WTC11 (cell line): ENCODE measurements at regions of chr15 and their contacts with region 1.

Region 1: GRCh38 chr15:79004336-79004735 is 59.5 kb upstream of the CTSH start:
- DNase-seq: no peak
- ATAC-seq: peak; percentile 82
- H3K4me3 Mint-ChIP-seq: no peak overlapping the region
- H3K27ac Mint-ChIP-seq: no peak overlapping the region
- H3K4me1 Mint-ChIP-seq: peaks cover 18% of the 10 kb centered on the region
- H3K27me3 Mint-ChIP-seq: no peaks in the 10 kb centered on the region
- CTCF ChIP-seq: no peak

Region 2: DNA sequence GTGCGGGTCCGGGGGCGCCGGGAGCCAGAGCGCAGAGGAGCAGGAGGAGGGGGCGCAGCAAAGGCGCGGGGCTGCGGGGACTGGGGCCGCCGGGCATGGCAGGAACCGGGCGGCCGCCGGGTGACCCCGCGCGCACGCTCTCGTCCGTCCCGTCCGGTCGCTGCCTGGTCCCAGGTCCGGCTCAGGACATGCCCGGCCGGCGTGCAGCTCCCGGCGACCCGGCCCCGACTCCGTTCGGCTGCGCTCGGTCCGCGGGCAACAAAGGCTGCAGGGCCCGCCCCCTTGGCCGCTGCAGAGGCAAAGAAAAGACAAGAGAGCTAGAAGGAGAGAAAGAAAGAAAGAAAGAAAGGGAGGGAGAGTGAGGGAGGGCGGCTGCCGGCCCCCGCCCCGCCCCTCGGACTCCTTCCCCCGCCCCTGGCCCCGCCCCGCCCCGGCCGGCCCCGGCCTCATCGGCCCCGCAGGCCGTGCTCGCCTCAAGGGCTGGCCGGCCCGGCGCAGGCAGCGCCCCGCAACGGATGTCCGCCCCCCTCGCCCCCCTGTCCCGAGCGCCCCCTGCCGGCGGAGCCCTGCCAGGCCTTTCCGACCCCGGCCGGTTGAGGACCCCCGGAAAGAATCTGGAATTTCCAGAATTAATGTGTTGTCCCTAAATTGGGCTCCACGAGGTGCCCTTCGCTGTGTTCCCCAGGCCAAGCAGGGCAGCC is 193.1 kb before region 1 on chr15 and contains the start of gene ADAMTS7:
- CTCF ChIA-PET with region 1: interaction called, 10 read pairs
- POLR2A ChIA-PET with region 1: no interaction called
- DNase-seq: peak; percentile 88
- ATAC-seq: peak; percentile 85
- H3K4me3 Mint-ChIP-seq: peak within 1 kb of the TSS; percentile 78
- H3K27ac Mint-ChIP-seq: 0 out of 2 replicates have a peak within 1 kb of the TSS, but pooled peaks have one; percentile 2
- H3K4me1 Mint-ChIP-seq: peaks cover 30% of the 10 kb centered on the region
- H3K27me3 Mint-ChIP-seq: peaks cover 14% of the 10 kb centered on the region
- CTCF ChIP-seq: peak; percentile 82
- total RNA-seq, gene ADAMTS7: 66.5 to 70.3 TPM (median 67.1 TPM) in 3 replicates

Region 3: DNA sequence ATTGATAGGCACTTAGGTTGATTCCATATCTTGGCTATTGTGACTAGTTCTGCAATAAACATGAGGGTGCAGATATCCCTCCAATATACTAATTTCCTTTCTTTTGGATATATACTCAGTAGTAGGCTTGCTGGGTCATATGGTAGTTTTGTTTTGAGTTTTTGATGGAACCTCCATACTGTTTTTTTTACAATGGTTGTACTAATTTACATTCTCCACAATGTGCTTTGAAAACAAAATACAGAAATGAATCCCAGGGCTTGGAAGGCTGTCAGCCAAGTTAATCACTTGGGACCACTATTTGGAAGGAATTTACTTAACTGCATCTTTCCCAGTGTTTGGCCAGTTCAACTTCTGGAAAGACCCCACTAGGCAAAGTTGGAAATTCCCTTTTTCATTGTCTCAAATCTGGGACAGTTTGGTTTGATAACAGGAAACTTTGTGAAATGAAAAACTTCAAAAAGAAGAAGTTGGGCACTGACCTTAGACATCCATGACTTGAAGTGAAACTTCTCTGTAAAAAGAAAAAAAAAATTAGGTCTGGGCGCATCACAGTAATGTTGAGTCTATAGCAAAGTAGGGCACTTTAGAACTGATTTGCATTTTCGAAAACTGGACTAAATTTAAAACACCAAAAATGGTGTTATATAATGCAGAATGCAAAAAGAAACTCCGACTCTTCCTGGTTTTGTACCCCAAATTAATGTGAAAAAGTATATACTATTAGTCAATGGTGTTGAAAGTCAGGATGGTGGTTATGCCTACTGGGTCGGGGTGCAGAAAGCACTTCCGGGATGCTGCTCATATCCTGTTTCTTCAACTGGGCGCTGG is 65.5 kb before region 1 on chr15:
- CTCF ChIA-PET with region 1: interaction called, 18 read pairs
- POLR2A ChIA-PET with region 1: no interaction called
- DNase-seq: no peak
- ATAC-seq: no peak
- H3K4me3 Mint-ChIP-seq: no peak overlapping the region
- H3K27ac Mint-ChIP-seq: peak overlapping the region; percentile 42; the same call in 1 of the 2 replicates
- H3K4me1 Mint-ChIP-seq: 0 out of 2 replicates have a peak, but pooled peaks cover 3% of the 10 kb centered on the region
- H3K27me3 Mint-ChIP-seq: peaks cover 14% of the 10 kb centered on the region
- CTCF ChIP-seq: no peak

Region 4: GRCh38 chr15:78968539-78969271 is 35.6 kb before region 1 on chr15:
- CTCF ChIA-PET with region 1: interaction called, 10 read pairs
- POLR2A ChIA-PET with region 1: no interaction called
- DNase-seq: no peak
- ATAC-seq: no peak
- H3K4me3 Mint-ChIP-seq: peak overlapping the region; percentile 45
- H3K27ac Mint-ChIP-seq: peak overlapping the region; percentile 94
- H3K4me1 Mint-ChIP-seq: peaks cover 44% of the 10 kb centered on the region
- H3K27me3 Mint-ChIP-seq: no peaks in the 10 kb centered on the region
- CTCF ChIP-seq: no peak

Region 5: GRCh38 chr15:79015416-79015815 is 11.1 kb after region 1 on chr15:
- CTCF ChIA-PET with region 1: interaction called, 29 read pairs
- POLR2A ChIA-PET with region 1: interaction called, 4 read pairs
- DNase-seq: no peak
- ATAC-seq: no peak
- H3K4me3 Mint-ChIP-seq: no peak overlapping the region
- H3K27ac Mint-ChIP-seq: no peak overlapping the region
- H3K4me1 Mint-ChIP-seq: no peaks in the 10 kb centered on the region
- H3K27me3 Mint-ChIP-seq: no peaks in the 10 kb centered on the region
- CTCF ChIP-seq: no peak

Region 6: GRCh38 chr15:79091204-79091867 is 87.0 kb after region 1 on chr15:
- CTCF ChIA-PET with region 1: interaction called, 14 read pairs
- POLR2A ChIA-PET with region 1: no interaction called
- DNase-seq: peak; percentile 51
- ATAC-seq: peak; percentile 31
- H3K4me3 Mint-ChIP-seq: peak overlapping the region; percentile 89
- H3K27ac Mint-ChIP-seq: no peak overlapping the region
- H3K4me1 Mint-ChIP-seq: peaks cover 11% of the 10 kb centered on the region
- H3K27me3 Mint-ChIP-seq: peaks cover 99% of the 10 kb centered on the region
- CTCF ChIP-seq: no peak